ENCODE measurements at regions of chr3 and their contacts with region 1.

Region 1: GRCh38 chr3:3179407-3180094 is at the start of gene CRBN:
- DNase-seq: peak; percentile 96
- CTCF ChIP-seq: peak; percentile 100

Region 2: GRCh38 chr3:2968475-2968874 is 211.1 kb before region 1 on chr3:
- in situ Hi-C with region 1: no loop called
- DNase-seq: no peak
- CTCF ChIP-seq: no peak

Region 3: DNA sequence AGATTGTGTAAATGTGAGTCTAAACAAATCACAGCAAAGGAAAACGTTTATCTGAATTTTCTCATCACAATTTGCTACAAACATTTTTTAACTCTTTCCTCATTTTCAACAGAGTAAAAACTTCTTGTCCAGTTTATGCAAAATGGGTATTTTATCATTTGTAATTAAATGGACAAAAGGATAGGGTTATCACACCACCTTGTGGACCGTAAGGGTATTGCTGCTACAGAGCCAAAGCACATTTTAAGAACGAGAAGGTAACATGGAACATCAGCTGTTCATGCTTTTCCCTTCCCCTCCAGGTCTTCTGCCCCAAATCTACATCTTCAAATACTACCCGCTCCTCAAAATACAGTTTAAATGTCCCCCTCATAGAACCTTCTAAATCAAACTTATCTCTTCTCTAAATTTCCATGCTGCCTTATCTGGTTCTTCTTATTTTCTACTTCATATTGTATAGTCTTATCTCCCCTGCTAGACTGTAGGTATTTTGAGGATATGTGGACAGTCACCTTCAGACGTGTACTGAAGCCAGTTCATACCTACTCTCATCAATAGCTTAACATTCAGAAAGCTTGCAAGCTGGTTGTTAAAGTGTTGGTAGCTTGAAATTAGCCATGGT is 1110.8 kb after region 1 on chr3:
- in situ Hi-C with region 1: loop called (anchors 25 kb)
- DNase-seq: peak; percentile 38
- CTCF ChIP-seq: peak; percentile 86